Activated CD4-positive, alpha-beta T cell treated with anti-CD3 and anti-CD28 coated beads, Interleukin-2, amount 10 ng/mL, durations not matched to agents 7 days and 5 days (primary cell): ENCODE measurements at regions of chr6 and their contacts with region 1.

Region 1: GRCh38 chr6:34610819-34611477 is 54.8 kb upstream of the SPDEF start:
- DNase-seq: no peak
- H3K4me3 Mint-ChIP-seq: no peak overlapping the region
- H3K27ac Mint-ChIP-seq: no peak overlapping the region
- H3K4me1 Mint-ChIP-seq: peaks cover 12% of the 10 kb centered on the region
- H3K27me3 Mint-ChIP-seq: no peaks in the 10 kb centered on the region

Region 2: GRCh38 chr6:34459899-34460593 is 150.9 kb before region 1 on chr6:
- CTCF ChIA-PET with region 1: interaction called, 21 read pairs
- POLR2A ChIA-PET with region 1: interaction called, 3 read pairs
- DNase-seq: peak; percentile 64
- H3K4me3 Mint-ChIP-seq: no peak overlapping the region
- H3K27ac Mint-ChIP-seq: no peak overlapping the region
- H3K4me1 Mint-ChIP-seq: peaks cover under 1% of the 10 kb centered on the region
- H3K27me3 Mint-ChIP-seq: peaks cover 15% of the 10 kb centered on the region

Region 3: GRCh38 chr6:34593701-34594100 is 17.2 kb before region 1 on chr6:
- CTCF ChIA-PET with region 1: interaction called, 10 read pairs
- POLR2A ChIA-PET with region 1: no interaction called
- DNase-seq: no peak
- H3K4me3 Mint-ChIP-seq: no peak overlapping the region
- H3K27ac Mint-ChIP-seq: no peak overlapping the region
- H3K4me1 Mint-ChIP-seq: peaks cover 14% of the 10 kb centered on the region
- H3K27me3 Mint-ChIP-seq: no peaks in the 10 kb centered on the region